Dorsolateral prefrontal cortex (tissue), 120 donors: ENCODE measurements at regions of chr4 and their contacts with region 1.

Region 1: GRCh38 chr4:25282061-25282460 is 30.5 kb upstream of the ZCCHC4 start:
- DNase-seq: no peak
- H3K4me3 ChIP-seq: no peak overlapping the region
- H3K27ac ChIP-seq: no peak overlapping the region
- H3K27me3 ChIP-seq: no peaks in the 10 kb centered on the region
- CTCF ChIP-seq: no peak

Region 2: GRCh38 chr4:23759066-23759465 is 1523.0 kb before region 1 on chr4:
- intact Hi-C with region 1: no loop called
- DNase-seq: no peak
- H3K4me3 ChIP-seq: no peak overlapping the region
- H3K27ac ChIP-seq: no peak overlapping the region
- H3K27me3 ChIP-seq: no peaks in the 10 kb centered on the region
- CTCF ChIP-seq: no peak

Region 3: DNA sequence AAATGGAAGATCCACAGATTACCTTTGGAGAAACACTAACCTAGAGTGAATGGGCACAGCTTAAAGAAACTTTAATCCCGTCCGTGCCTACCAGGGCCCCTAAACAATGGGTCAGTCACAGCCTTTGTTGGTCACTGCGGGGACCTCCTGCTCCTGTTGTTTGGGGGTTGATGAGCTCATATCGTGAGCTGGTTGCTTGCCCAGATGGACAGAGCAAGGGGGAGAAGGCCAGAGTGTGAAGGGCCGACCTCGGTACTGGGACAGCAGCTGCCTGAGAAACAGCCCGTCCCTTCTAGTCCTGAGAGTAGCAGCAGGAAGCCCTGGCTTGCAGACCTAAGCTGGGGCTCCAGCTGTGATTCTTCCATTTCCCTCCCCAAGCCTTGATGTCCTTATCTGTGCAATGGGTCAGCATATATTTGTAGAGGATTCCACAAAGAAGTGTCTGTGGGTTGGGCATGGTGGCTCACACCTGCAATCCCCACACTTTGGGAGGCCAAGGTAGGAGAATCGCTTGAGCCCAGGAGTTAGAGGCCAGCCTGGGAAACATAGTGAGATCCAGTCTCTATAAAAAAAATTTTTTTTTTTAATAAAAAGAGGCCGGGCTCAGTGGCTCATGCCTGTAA is 304.0 kb after region 1 on chr4:
- intact Hi-C with region 1: loop called in 1 of 2 experiments (anchors 5 kb)
- DNase-seq: no peak
- H3K4me3 ChIP-seq: no peak overlapping the region
- H3K27ac ChIP-seq: no peak overlapping the region
- H3K27me3 ChIP-seq: no peaks in the 10 kb centered on the region
- CTCF ChIP-seq: no peak